MCF 10A (cell line): ENCODE measurements at regions of chr2 and their contacts with region 1.

Region 1: DNA sequence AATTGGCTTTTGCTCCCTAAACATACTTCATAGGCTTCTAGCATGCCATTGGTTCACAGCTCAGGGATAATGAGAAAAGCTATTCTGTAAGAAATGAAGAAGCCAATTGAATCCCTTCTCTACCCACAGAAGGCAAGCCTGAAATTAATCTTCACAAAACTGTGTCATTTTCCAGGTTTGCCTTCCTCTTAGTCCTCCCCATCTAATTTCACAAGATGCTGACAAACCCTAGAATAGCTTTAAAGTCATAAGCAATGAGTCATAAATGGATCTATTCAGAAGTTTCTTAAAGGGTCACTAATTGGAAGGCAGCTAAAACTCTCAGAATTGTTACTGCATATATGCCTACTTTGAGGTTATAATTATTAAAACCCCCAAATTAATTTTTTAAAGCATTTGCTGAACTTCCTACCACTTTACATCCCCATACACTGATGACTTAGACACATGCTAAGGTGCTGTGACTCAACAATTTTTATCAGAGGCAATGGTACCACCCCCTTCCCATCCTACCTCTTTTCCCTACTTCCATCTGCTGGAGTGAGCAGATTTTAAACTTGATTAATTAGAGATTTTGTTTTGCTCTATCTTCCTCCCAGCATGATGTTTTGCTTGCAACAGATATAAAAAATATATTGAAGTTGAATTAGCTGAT is 51.3 kb upstream of the NABP1 start:
- DNase-seq: peak; percentile 64
- H3K4me3 Mint-ChIP-seq: no peak overlapping the region
- H3K27ac Mint-ChIP-seq: no peak overlapping the region
- H3K4me1 Mint-ChIP-seq: peaks cover 53% of the 10 kb centered on the region
- H3K27me3 Mint-ChIP-seq: no peaks in the 10 kb centered on the region
- CTCF ChIP-seq: no peak

Region 2: DNA sequence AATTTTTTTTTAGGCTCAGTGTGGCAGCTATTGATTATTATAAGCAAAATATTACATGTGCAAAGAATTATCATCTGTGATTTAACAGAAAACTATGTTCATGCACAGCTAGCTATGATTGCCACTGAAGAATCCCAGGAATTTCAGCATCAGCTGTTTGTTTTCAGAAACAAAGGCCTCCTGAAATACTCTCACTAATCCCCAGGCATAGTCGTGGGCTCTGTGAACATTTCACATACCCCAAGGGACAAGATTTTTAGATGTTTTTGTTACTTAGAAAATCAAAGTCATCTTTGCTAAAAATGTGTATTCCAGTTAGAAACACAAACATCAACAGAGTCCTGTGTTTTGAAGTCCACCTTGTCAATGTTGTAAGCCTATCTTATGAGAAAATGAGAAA is 225.3 kb before region 1 on chr2:
- CTCF ChIA-PET with region 1: no interaction called
- POLR2A ChIA-PET with region 1: no interaction called
- intact Hi-C with region 1: no loop called
- DNase-seq: no peak
- H3K4me3 Mint-ChIP-seq: no peak overlapping the region
- H3K27ac Mint-ChIP-seq: no peak overlapping the region
- H3K4me1 Mint-ChIP-seq: no peaks in the 10 kb centered on the region
- H3K27me3 Mint-ChIP-seq: no peaks in the 10 kb centered on the region
- CTCF ChIP-seq: no peak

Region 3: GRCh38 chr2:191566344-191566743 is 60.3 kb before region 1 on chr2:
- CTCF ChIA-PET with region 1: interaction called, 10 read pairs
- POLR2A ChIA-PET with region 1: interaction called, 5 read pairs
- intact Hi-C with region 1: no loop called
- DNase-seq: peak; percentile 80
- H3K4me3 Mint-ChIP-seq: no peak overlapping the region
- H3K27ac Mint-ChIP-seq: no peak overlapping the region
- H3K4me1 Mint-ChIP-seq: no peaks in the 10 kb centered on the region
- H3K27me3 Mint-ChIP-seq: no peaks in the 10 kb centered on the region
- CTCF ChIP-seq: peak; percentile 76

Region 4: DNA sequence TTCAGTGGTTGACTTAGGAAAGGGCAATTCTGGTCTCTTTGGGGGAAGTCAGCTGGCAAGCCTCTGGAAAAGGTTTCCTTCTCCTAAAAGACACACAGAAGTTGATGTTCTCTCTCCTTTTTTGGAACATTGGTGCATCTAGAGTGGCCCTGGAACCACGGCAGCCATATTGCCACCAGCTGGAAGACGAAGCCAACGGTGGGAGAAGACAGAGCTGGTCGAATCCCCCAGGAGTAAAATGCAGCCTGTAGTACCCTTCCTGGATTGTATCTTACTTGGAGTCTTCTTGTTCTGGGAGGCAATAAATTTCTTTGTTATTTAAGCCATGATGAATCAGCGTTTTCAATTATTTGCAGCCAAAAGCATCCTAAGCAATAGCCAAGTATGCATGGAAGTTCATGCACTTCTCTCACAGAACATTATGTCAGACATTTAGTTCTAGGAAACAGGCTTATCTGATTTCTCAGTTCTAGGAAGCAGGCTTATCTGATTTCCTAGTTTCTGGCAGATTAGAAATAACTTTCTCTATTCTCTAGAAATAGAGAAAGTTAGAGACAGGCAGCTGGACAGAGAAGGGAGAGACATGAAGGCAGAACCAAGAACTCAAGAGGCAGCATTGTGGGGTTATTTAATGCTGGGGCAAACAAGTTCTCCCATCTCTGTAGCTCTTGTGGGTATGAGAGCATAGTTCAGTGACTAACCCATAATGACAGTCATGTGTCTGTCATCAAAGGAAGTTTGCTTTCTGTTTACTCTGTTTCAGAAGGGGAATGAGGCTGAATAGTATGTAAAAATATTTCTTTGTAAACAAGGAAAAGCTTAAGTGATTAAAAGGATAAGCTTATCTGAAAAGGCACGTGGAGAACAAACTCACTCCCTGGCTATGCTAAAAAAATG is 10.8 kb after region 1 on chr2:
- CTCF ChIA-PET with region 1: interaction called, 4 read pairs
- POLR2A ChIA-PET with region 1: interaction called, 21 read pairs
- intact Hi-C with region 1: no loop called
- DNase-seq: peak; percentile 36
- H3K4me3 Mint-ChIP-seq: no peak overlapping the region
- H3K27ac Mint-ChIP-seq: peak overlapping the region; percentile 61
- H3K4me1 Mint-ChIP-seq: peaks cover 30% of the 10 kb centered on the region
- H3K27me3 Mint-ChIP-seq: no peaks in the 10 kb centered on the region
- CTCF ChIP-seq: no peak

Region 5: GRCh38 chr2:191646195-191646902 is 19.7 kb after region 1 on chr2:
- CTCF ChIA-PET with region 1: interaction called, 4 read pairs
- POLR2A ChIA-PET with region 1: interaction called, 18 read pairs
- intact Hi-C with region 1: no loop called
- DNase-seq: peak; percentile 74
- H3K4me3 Mint-ChIP-seq: no peak overlapping the region
- H3K27ac Mint-ChIP-seq: peak overlapping the region; percentile 83
- H3K4me1 Mint-ChIP-seq: peaks cover 26% of the 10 kb centered on the region
- H3K27me3 Mint-ChIP-seq: no peaks in the 10 kb centered on the region
- CTCF ChIP-seq: no peak